ENCODE measurements at regions of chr12 and their contacts with region 1.

Region 1: DNA sequence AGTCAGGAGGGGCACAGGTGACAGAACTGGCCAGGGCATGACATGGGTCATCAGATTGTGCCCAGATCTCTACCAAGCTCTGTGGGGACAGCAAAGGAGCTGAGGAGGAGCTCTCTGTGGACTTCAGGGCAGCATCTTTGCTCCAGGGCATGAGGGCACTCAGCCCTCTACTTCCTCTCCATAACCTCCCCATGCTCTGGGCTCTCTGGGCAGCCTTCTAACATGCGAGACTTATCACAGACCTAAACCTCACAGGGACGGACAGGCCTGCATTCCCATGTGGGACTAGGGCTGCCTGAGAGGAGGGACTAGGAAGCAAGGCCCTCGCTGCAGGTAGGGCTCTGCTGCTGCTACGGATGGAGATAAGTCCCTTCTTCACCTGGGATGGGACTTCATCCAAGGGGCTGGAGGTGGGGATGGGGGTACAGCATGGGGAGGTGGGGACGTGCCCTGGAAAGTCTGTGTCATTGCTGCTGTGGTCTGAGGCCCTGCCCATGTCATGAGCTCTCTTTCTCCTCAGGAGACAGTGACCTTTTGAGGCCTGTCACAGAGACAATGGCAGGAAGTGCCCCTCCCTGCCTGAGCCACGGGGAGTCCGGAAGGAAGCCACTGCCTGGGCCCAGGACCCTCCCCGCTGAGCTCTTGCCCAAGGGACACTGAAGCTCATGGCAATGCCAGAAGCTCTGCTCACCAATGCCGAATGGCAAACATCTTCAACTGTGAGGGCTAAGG is 44.1 kb downstream of the PITPNM2 start:
- DNase-seq: peak; percentile 45
- ATAC-seq: peak; percentile 95
- H3K4me3 ChIP-seq: peak overlapping the region in 3 of 5 experiments; percentile 20 to 36 (median 20)
- H3K4me3 Mint-ChIP-seq: peak overlapping the region; percentile 78
- H3K27ac ChIP-seq: peak overlapping the region; percentile 74 to 81
- H3K27ac Mint-ChIP-seq: peak overlapping the region; percentile 97
- H3K4me1 ChIP-seq: peaks cover 25 to 32% of the 10 kb centered on the region in 2 donors
- H3K4me1 Mint-ChIP-seq: peaks cover 41% of the 10 kb centered on the region
- H3K27me3 ChIP-seq: no peaks in the 10 kb centered on the region
- H3K27me3 Mint-ChIP-seq: no peaks in the 10 kb centered on the region
- CTCF ChIP-seq: no peak

Region 2: DNA sequence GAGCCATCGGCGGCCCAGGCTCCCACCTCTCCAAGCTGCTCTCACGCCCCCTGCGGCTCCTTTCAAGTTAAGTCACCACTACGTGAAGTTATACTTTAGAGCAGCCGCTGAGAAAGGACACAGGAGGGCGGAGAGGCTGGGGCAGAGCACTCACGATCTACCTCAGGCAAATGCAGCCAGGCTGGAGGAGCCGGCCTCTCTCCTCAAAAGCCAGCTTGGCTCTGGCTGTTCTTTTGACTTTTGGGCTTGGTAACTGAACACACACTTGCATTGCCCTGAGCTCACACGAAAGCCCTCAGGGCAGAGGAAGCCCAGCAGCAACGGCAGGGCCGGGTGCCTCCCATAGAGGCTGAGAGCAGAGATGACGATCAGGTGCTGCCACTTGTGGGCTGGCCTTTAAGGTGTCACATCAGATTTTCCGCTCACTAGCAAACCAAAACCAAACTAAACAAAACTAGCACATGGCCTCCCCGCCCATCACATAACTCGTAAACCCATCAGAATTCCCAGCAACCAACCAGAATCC is 31.1 kb before region 1 on chr12:
- CTCF ChIA-PET with region 1: interaction called, 3 read pairs
- POLR2A ChIA-PET with region 1: interaction called, 6 read pairs
- intact Hi-C with region 1: loop called (anchors 1 kb)
- DNase-seq: peak; percentile 53
- ATAC-seq: peak; percentile 86
- H3K4me3 ChIP-seq: peak overlapping the region in 1 of 5 experiments; percentile 6
- H3K4me3 Mint-ChIP-seq: peak overlapping the region; percentile 74
- H3K27ac ChIP-seq: peak overlapping the region; percentile 41 to 63
- H3K27ac Mint-ChIP-seq: peak overlapping the region; percentile 86
- H3K4me1 ChIP-seq: peaks cover 16 to 34% of the 10 kb centered on the region in 2 donors
- H3K4me1 Mint-ChIP-seq: peaks cover 34% of the 10 kb centered on the region
- H3K27me3 ChIP-seq: peaks cover 0 to 3% (median 0%) of the 10 kb centered on the region in 4 experiments
- H3K27me3 Mint-ChIP-seq: no peaks in the 10 kb centered on the region
- CTCF ChIP-seq: no peak

Region 3: DNA sequence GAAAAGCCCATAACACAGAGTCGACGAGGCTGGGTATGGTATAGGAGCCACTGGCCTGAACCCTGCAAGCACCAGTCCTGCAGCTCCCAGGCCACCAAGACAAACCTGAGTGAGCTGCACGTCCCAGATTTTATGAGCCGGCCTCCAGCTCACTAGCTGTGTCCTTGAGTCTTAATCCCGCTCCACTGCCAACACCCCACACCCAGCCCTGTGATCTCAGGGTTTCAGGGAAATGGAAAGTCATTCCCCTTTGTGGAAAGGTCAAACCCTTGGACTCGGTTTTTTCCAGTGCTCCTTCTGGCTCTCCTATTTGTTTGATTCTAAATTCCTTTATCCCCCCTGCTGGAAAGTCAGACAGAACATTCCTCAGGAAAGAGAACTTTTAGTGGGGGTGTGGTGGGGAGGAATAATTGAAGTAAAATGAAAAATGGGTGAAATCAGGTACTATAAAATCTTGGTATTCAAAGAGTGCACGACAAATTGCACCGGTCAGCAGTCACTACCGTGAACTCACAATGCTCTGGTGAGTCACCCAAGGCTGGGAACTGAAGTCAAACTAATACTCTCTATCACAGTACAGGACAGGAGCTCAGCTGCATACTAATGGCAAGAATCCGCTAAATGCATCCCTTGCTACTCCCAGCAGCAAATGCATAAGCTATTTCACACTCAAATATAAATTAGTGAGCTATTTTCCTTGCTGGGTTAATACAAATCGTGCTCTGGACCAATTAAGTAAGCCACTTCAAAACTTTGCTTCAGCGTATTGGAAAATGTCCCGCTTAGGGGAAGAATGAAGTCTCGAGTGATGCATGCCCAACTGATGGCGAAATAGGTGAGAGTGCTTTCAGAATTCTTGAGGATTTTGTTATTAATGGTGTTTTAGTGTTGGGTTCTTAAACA is 35.1 kb after region 1 on chr12:
- CTCF ChIA-PET with region 1: interaction called, 6 read pairs
- POLR2A ChIA-PET with region 1: interaction called, 4 read pairs
- intact Hi-C with region 1: loop called (anchors 5 kb)
- DNase-seq: no peak
- ATAC-seq: no peak
- H3K4me3 ChIP-seq: no peak overlapping the region
- H3K4me3 Mint-ChIP-seq: no peak overlapping the region
- H3K27ac ChIP-seq: no peak overlapping the region
- H3K27ac Mint-ChIP-seq: no peak overlapping the region
- H3K4me1 ChIP-seq: peaks cover 25 to 29% of the 10 kb centered on the region in 2 donors
- H3K4me1 Mint-ChIP-seq: peaks cover 42% of the 10 kb centered on the region
- H3K27me3 ChIP-seq: no peaks in the 10 kb centered on the region
- H3K27me3 Mint-ChIP-seq: no peaks in the 10 kb centered on the region
- CTCF ChIP-seq: no peak

Measured in B cell (primary cell).